Activated CD4-positive, alpha-beta memory T cell treated with anti-CD3 and anti-CD28 coated beads, Interleukin-2, amount 10 ng/mL, durations not matched to agents 7 days and 5 days (primary cell): ENCODE measurements at regions of chr2 and their contacts with region 1.

Region 1: GRCh38 chr2:171160119-171160955 is at the start of gene TLK1:
- DNase-seq: peak; percentile 77
- H3K4me3 Mint-ChIP-seq: peak within 1 kb of the TSS; percentile 94
- H3K27ac Mint-ChIP-seq: peak within 1 kb of the TSS; percentile 91
- H3K4me1 Mint-ChIP-seq: peaks cover 59% of the 10 kb centered on the region
- H3K27me3 Mint-ChIP-seq: no peaks in the 10 kb centered on the region
- total RNA-seq, gene TLK1: 74.9 to 79.5 TPM

Region 2: DNA sequence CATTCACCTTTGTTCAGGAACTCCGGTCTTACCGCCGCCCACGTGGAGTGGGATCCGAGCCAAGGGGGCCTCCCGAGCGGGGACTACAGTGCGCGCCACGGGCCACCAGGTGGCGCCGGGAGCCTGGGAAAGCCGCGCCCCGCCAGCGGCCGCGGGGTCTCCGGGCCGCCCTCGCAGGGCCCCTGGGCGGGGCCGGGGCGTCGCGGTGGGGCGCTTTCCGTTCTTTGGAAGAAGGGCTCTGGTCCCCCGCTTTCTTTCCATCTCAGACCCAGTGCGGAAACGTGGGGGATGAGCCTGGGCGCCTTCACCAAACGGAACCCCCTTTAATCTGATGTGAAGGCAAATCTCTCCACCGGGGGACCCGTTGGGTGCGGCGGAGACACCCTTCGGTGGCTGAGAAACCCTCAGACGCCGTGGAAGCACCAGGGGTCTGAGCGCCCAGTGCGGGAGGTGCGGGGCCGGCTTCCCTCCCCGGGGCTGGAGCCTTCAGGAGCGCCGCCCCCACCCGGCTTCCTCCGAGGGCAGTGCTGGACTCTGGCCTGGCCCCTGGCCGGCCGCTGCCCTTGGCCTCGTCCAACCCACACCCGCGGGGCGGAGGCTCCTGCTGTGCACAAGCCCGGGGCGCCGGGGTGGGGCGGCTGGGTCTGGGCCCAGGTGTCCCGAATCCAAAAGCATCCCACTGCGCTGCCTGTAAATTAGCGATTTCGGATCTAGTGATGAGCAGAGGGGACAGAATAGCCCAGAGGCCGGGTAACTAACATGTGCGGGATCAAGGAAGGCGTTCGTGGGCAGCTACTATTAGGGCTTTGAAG is 186.6 kb before region 1 on chr2:
- CTCF ChIA-PET with region 1: interaction called, 36 read pairs
- POLR2A ChIA-PET with region 1: interaction called, 10 read pairs
- DNase-seq: peak; percentile 82
- H3K4me3 Mint-ChIP-seq: peak overlapping the region; percentile 71
- H3K27ac Mint-ChIP-seq: no peak overlapping the region
- H3K4me1 Mint-ChIP-seq: peaks cover 7% of the 10 kb centered on the region
- H3K27me3 Mint-ChIP-seq: peaks cover 3% of the 10 kb centered on the region

Region 3: GRCh38 chr2:171086352-171087290 is 73.7 kb before region 1 on chr2:
- CTCF ChIA-PET with region 1: interaction called, 11 read pairs
- POLR2A ChIA-PET with region 1: no interaction called
- DNase-seq: peak; percentile 54
- H3K4me3 Mint-ChIP-seq: peak overlapping the region; percentile 48
- H3K27ac Mint-ChIP-seq: no peak overlapping the region
- H3K4me1 Mint-ChIP-seq: peaks cover 32% of the 10 kb centered on the region
- H3K27me3 Mint-ChIP-seq: no peaks in the 10 kb centered on the region

Region 4: GRCh38 chr2:171173089-171173488 is 12.8 kb after region 1 on chr2:
- CTCF ChIA-PET with region 1: interaction called, 3 read pairs
- POLR2A ChIA-PET with region 1: interaction called, 15 read pairs
- DNase-seq: no peak
- H3K4me3 Mint-ChIP-seq: no peak overlapping the region
- H3K27ac Mint-ChIP-seq: no peak overlapping the region
- H3K4me1 Mint-ChIP-seq: peaks cover 9% of the 10 kb centered on the region
- H3K27me3 Mint-ChIP-seq: no peaks in the 10 kb centered on the region

Region 5: DNA sequence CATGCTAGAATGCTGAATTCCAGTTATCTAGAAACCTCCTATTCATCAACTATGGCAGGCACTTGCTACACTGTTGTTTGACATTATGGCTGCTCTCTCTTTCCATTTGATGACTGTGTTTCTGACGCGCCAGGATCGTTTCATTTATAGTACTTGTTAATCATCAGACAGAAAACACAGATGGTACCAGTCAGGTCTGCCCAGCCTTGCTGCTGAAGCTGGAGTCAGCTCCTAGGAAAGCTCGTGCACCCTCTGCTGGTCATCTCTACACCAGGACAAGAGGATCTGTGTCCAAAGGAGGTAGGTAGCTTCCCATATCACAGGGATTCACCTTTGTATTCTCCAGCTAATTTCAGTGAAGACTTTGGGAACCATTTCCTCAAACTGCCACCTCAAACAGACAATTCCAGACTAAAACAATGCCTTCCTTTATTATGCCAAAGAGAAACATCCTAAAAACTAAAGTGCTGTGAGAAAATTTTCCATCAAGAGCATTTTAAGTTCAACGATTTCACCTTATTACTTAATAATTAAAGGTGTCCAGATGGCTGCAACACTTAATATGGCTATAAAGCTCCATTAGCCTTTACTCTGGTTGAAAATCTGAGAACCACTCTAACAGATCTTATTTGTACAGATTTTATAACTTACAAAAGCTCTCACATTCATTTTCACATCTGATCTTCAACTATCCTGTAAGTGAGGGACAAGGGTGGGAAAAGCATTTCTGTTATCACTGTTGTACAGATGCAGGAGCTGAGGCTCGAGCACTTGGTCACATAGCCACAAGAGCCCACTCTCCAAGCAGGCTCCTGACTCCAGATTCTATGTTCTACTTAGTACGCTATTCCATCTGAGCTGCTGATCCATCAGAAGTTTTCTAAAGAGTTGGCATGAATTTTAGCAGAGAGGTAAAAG is 255.9 kb after region 1 on chr2:
- CTCF ChIA-PET with region 1: interaction called, 10 read pairs
- POLR2A ChIA-PET with region 1: interaction called, 5 read pairs
- DNase-seq: peak; percentile 81
- H3K4me3 Mint-ChIP-seq: no peak overlapping the region
- H3K27ac Mint-ChIP-seq: no peak overlapping the region
- H3K4me1 Mint-ChIP-seq: peaks cover 15% of the 10 kb centered on the region
- H3K27me3 Mint-ChIP-seq: no peaks in the 10 kb centered on the region

Region 6: DNA sequence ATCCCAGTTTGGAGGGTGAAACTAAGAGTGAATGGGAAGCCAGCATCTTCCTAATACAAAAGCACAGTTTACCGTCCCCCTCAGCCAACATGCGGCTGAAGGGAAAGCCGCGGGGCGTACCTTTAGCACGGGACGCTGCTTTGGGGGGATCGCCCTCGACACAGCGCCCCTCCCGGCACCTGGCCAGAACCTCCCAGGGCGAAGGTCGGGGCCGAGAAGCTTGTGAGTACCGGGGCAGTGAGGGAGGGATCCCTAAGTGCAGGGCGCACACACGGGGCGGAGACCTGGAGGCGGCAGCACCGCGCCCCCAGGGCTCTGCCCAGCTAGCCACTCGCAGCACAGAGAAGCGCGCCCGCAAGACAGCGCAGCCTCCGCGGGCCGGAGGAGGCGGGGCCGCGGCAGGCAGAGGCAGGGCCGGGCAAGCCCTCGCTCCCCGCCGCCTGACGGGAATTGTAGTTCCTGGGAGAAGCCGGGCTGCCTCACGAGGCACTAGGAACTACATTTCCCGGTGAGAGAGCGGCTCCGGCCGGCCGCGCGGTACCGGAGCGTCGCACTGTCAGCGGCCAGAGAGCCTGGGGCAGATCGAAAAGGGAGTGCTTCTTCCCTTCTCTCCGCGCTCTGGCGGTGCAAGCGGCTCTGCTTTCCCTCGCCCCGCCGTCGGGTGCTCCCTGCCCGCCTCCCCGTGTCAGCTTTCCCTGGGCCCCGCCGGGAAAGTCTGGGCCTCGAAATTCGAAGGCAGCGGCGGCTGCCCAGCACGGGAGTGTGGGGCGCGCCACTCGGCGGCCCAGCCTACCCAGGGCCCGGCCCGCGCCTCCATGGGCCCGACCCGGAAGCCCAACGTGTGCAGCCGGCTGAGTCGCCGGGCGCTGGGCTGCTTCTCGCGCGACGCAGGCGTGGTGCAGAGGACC is 273.7 kb after region 1 on chr2 and contains the starts of genes DCAF17 and METTL8:
- CTCF ChIA-PET with region 1: no interaction called
- POLR2A ChIA-PET with region 1: interaction called, 29 read pairs
- DNase-seq: peak; percentile 95
- H3K4me3 Mint-ChIP-seq: peak within 1 kb of the TSS; percentile 81
- H3K27ac Mint-ChIP-seq: peak within 1 kb of the TSS; percentile 96
- H3K4me1 Mint-ChIP-seq: peaks cover 33% of the 10 kb centered on the region
- H3K27me3 Mint-ChIP-seq: no peaks in the 10 kb centered on the region
- total RNA-seq, gene DCAF17: 12.8 to 14.8 TPM
- total RNA-seq, gene METTL8: 13.6 to 20.0 TPM